ENCODE measurements at regions of chr6 and their contacts with region 1.

Region 1: DNA sequence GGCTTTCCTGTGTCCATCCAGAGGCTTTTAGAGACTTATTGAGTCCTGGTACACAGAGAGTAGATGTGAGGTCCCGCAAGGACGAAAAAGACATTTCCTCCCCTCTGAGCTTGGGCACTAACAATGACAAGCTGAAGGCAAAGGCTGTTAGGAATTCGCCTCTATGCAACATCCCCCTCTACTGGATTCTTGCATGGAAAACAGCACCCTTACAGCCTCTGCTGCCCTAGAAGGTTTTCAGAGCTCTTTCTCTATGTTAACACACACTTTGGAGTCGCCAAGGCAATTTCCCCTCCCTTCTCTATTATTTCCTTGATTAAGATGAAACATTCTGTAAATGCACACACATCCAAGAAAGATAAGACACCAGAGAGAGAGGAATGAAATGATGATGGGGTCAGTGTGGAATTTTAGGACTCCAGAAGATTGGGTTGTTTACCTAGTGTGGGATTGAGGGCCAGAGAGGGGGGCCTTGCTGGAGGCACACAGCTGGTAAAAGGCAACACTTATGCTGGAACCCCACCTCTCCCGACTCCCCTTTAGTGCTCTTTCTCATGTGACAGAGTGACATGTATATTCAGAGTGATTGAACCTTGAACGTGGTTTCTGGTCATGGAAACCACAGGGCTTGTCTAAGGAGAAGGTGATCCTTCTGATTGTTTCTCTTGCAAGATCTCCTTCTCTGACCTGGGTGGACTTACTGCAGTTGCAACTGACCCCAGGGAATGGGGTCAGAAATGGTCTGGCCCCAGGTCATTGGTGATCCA is 300.7 kb downstream of the CLIC5 start:
- DNase-seq: no peak
- H3K4me3 ChIP-seq: no peak overlapping the region
- H3K27me3 ChIP-seq: no peaks in the 10 kb centered on the region
- CTCF ChIP-seq: peak; percentile 86

Region 2: DNA sequence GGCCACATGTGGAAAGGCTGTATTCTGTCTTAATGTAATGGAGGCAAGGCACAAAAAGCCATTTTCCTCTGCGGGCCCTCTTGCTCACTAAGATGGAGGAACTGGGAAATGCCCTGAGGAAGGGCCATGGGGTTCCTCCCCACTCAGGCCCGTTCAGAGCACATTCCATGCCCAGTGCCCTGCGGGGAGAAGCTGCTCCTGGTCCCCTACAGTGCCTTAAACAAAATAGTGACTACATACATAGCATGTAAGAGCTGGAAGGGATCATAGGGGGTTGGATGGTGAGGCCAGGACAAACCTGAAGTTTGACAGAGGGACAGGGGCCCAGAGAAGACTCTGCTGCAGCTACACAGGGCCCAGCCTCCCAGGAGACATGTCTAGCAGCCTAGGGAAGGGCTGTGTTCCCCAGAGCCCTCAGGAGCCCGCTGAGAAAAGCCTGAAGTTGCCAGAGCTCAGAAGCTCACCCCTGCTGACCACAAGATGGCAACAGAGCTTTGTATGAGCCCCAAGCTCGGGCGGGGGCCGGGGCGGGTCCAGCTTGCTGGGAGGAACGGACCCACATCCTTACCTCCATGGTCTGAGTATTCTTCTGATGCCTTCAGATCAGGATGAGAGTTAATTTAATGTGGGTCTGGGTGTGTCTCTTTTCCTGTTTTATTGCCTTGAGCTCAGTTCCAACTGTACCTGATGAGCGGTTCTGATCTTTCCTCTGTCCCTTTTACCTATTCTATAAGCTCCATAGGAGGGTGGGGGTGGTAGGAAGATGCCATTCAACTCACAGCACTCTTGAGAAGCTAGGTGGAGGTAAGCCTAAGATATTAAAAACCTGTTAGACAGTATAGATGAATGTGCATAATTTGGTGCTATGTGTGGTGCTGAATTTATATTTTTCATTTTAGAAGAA is 1084.5 kb before region 1 on chr6:
- CTCF ChIA-PET with region 1: interaction called, 13 read pairs
- POLR2A ChIA-PET with region 1: no interaction called
- DNase-seq: no peak
- H3K4me3 ChIP-seq: no peak overlapping the region
- H3K27me3 ChIP-seq: peaks cover 7% of the 10 kb centered on the region
- CTCF ChIP-seq: peak; percentile 83

Region 3: GRCh38 chr6:44655412-44656342 is 1059.2 kb before region 1 on chr6:
- CTCF ChIA-PET with region 1: interaction called, 12 read pairs
- POLR2A ChIA-PET with region 1: no interaction called
- DNase-seq: no peak
- H3K4me3 ChIP-seq: no peak overlapping the region
- H3K27me3 ChIP-seq: no peaks in the 10 kb centered on the region
- CTCF ChIP-seq: peak; percentile 96

Region 4: DNA sequence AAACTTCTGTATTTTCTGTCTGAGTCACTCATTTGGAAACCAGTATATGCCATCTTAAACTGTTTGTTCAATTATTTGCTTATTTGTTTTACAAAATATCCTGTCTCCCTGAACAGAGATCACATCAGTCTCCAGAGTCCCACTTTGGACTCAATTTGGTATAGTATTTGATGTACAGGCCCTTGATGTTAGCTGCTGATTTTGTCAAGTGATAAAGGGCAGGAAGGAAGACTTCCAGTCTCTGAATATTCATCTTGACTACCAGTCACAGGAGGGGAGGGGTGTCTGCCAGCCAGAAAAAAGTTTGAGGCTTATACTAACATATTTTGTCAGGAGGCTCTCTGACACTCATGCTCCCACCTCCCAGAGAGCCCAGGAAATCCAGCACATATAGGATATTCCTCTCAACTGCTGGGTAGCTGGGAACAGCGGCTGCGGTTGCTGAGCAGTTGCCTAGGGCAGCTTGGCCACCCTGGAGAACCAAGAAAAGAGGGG is 763.6 kb before region 1 on chr6:
- CTCF ChIA-PET with region 1: no interaction called
- POLR2A ChIA-PET with region 1: interaction called, 12 read pairs
- DNase-seq: no peak
- H3K4me3 ChIP-seq: no peak overlapping the region
- H3K27me3 ChIP-seq: no peaks in the 10 kb centered on the region
- CTCF ChIP-seq: no peak

Region 5: DNA sequence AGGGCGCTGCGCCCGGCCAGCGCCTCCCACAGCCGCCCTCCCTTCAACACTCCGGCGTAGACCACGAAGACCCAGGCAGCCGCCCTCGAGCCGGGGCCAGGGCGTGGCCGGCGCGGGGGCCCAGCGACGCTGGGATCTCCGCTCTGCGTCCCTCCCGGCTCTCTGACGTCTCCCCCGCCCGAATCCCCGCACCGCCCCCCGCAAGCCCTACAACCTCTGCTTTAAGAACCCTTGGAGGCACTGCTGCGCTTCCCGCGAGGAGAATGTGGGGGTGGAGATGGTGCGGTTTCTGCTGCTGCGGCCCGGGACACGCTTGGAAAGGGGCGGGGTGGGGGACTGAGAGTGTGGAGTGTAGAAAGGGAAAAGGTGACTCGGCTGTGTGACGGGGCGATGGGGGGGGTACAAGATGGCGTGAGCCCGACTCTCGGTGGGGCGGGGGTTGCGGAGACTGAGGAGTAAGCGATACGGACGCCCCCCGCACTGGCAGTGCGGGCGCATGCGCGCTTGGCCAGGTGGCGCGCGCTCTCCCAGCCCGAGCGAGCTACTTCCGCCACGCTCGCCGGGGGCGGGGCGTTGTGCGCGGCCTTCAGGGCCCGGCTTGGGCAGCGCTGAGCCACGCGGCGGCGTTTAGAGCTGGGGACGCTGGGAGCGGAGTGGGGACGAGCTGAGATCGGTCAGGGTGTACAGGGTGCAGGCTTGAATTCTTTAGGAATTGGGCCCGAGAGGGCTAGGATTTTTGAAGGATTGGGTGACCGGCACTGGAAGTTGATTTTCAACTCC is 337.2 kb before region 1 on chr6 and contains the start of gene SUPT3H:
- CTCF ChIA-PET with region 1: interaction called, 10 read pairs
- POLR2A ChIA-PET with region 1: interaction called, 3 read pairs
- DNase-seq: peak; percentile 56
- H3K4me3 ChIP-seq: peak within 1 kb of the TSS; percentile 75
- H3K27me3 ChIP-seq: no peaks in the 10 kb centered on the region
- CTCF ChIP-seq: peak; percentile 29
- polyA plus RNA-seq, gene SUPT3H: 7.8 and 9.2 TPM in 2 replicates

Region 6: GRCh38 chr6:45421709-45422502 is 293.0 kb before region 1 on chr6:
- CTCF ChIA-PET with region 1: interaction called, 10 read pairs
- POLR2A ChIA-PET with region 1: no interaction called
- DNase-seq: no peak
- H3K4me3 ChIP-seq: peak overlapping the region; percentile 57
- H3K27me3 ChIP-seq: no peaks in the 10 kb centered on the region
- CTCF ChIP-seq: peak; percentile 60

Region 7: GRCh38 chr6:45922728-45923351 is 207.9 kb after region 1 on chr6:
- CTCF ChIA-PET with region 1: interaction called, 10 read pairs
- POLR2A ChIA-PET with region 1: interaction called, 4 read pairs
- DNase-seq: no peak
- H3K4me3 ChIP-seq: no peak overlapping the region
- H3K27me3 ChIP-seq: no peaks in the 10 kb centered on the region
- CTCF ChIP-seq: peak; percentile 85

Measured in BJ (cell line).